K562 (cell line): ENCODE measurements at regions of chr4 and their contacts with region 1.

Region 1: DNA sequence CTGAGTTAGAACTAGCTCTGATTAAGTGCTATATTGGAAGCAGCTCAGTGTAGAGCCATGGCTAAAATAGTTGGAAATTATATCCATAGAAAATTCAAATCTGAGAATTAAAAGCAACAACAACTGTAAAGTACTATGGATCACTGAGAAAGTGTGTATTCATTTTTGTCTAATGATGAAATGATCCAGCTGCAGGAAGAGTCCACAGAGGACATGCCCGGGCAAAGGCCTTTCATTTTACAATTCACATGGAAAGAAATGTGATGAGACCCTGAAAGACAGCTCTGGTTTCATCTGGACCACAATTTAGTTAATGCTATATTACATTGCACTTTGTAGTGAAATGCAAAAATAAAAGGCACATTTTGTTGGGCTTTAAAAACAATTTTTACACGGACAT is 196.8 kb upstream of the FAT1 start:
- DNase-seq: no peak
- ATAC-seq: no peak
- H3K4me3 ChIP-seq: no peak overlapping the region
- H3K27ac ChIP-seq: no peak overlapping the region
- H3K4me1 ChIP-seq: no peaks in the 10 kb centered on the region
- H3K27me3 ChIP-seq: peaks cover 3 to 8% of the 10 kb centered on the region in 2 experiments; a peak in 4 of 5 replicates
- CTCF ChIP-seq: no peak
- EP300 ChIP-seq: no peak
- POLR2A ChIP-seq: no peak
- RAD21 ChIP-seq: no peak

Region 2: GRCh38 chr4:186839122-186840037 is 81.1 kb before region 1 on chr4:
- CTCF ChIA-PET with region 1: no interaction called
- POLR2A ChIA-PET with region 1: no interaction called
- in situ Hi-C with region 1: no loop called
- intact Hi-C with region 1: loop called (anchors 10 kb)
- DNase-seq: peak; percentile 32 to 62 (median 49)
- ATAC-seq: peak; percentile 68
- H3K4me3 ChIP-seq: peak overlapping the region; percentile 32
- H3K27ac ChIP-seq: peak overlapping the region; percentile 92
- H3K4me1 ChIP-seq: peaks cover 10 to 18% of the 10 kb centered on the region in 2 experiments
- H3K27me3 ChIP-seq: no peaks in the 10 kb centered on the region
- CTCF ChIP-seq: no peak
- EP300 ChIP-seq: no peak
- POLR2A ChIP-seq: no peak
- RAD21 ChIP-seq: no peak